Psoas muscle (tissue), 8 donors: ENCODE measurements at regions of chr4 and their contacts with region 1.

Region 1: DNA sequence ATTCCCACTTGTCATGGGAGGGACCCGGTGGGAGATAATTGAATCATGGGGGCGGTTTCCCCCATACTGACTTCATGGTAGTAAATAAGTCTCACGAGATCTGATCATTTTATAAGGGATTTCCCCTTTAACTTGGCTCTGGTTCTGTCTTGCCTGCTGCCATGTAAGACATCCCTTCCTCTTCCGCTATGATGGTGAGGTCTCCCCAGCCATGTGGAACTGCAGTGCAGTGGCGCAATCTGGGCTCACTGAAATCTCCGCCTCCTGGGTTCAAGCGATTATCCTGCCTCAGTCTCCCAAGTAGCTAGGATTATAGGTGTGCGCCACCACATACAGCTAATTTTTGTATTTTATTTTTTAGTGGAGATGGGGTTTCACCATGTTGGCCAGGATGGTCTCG is 2.9 kb downstream of the HPGDS start:
- DNase-seq: no peak
- ATAC-seq: no peak
- H3K4me3 ChIP-seq: no peak overlapping the region
- H3K27ac ChIP-seq: no peak overlapping the region
- H3K4me1 ChIP-seq: no peaks in the 10 kb centered on the region
- H3K27me3 ChIP-seq: no peaks in the 10 kb centered on the region
- CTCF ChIP-seq: no peak

Region 2: DNA sequence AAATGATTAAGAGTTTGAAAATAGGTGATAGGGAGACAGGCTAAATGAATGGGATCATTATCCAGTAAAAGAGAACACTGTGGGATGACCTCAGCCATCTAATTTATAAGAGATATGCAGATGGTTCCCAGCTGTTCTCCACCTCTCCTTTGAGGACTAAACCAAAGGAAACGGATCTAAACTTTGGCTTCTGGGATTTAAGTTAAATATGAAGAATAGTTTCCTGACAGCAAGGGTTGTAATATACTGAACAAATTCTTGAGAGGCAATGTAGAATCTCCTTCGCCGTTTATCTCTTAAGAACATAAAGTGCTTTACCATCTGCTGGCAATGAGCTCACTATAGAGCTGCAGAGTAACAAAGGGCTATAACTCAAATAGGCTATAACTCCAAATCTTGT is 38.3 kb after region 1 on chr4:
- intact Hi-C with region 1: loop called (anchors 5 to 10 kb)
- DNase-seq: no peak
- ATAC-seq: no peak
- H3K4me3 ChIP-seq: no peak overlapping the region
- H3K27ac ChIP-seq: no peak overlapping the region
- H3K4me1 ChIP-seq: no peaks in the 10 kb centered on the region
- H3K27me3 ChIP-seq: no peaks in the 10 kb centered on the region
- CTCF ChIP-seq: no peak

Region 3: GRCh38 chr4:94442251-94442650 is 102.5 kb after region 1 on chr4:
- intact Hi-C with region 1: no loop called
- DNase-seq: no peak
- ATAC-seq: peak; percentile 98
- H3K4me3 ChIP-seq: peak overlapping the region; percentile 33
- H3K27ac ChIP-seq: peak overlapping the region; percentile 81
- H3K4me1 ChIP-seq: peaks cover 27% of the 10 kb centered on the region
- H3K27me3 ChIP-seq: no peaks in the 10 kb centered on the region
- CTCF ChIP-seq: no peak